Heart left ventricle (tissue), 16 donors: ENCODE measurements at regions of chr6 and their contacts with region 1.

Region 1: DNA sequence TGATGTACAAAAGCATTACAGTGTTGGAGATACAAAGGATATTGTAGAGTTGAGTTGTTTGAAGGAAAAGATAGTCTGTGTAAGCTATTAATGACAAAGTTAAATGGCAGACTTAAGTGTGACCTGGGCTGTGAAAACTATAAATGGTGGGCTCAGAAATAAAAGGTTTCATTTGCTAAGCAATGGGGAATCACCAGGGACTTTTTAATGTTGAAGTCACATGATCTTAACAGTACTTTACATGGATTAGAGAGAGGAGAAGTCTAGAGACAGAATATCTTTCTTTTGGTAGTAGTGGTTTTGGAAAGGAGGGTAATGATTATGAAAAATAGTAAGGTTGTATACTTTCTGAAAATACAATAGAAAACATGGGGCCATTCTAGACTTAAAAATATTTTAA is 67.1 kb downstream of the SCAF8 start:
- DNase-seq: no peak
- ATAC-seq: no peak
- H3K4me3 ChIP-seq: no peak overlapping the region
- H3K27ac ChIP-seq: no peak overlapping the region
- H3K4me1 ChIP-seq: peaks cover 0 to 12% (median 0%) of the 10 kb centered on the region in 12 donors
- H3K27me3 ChIP-seq: no peaks in the 10 kb centered on the region
- CTCF ChIP-seq: no peak
- POLR2A ChIP-seq: no peak

Region 2: GRCh38 chr6:154558984-154559383 is 241.4 kb before region 1 on chr6:
- intact Hi-C with region 1: no loop called
- DNase-seq: no peak
- ATAC-seq: peak in 1 of 4 donors; percentile 44
- H3K4me3 ChIP-seq: no peak overlapping the region
- H3K27ac ChIP-seq: no peak overlapping the region
- H3K4me1 ChIP-seq: peaks cover 0 to 13% (median 0%) of the 10 kb centered on the region in 12 donors
- H3K27me3 ChIP-seq: no peaks in the 10 kb centered on the region
- CTCF ChIP-seq: no peak
- POLR2A ChIP-seq: no peak

Region 3: DNA sequence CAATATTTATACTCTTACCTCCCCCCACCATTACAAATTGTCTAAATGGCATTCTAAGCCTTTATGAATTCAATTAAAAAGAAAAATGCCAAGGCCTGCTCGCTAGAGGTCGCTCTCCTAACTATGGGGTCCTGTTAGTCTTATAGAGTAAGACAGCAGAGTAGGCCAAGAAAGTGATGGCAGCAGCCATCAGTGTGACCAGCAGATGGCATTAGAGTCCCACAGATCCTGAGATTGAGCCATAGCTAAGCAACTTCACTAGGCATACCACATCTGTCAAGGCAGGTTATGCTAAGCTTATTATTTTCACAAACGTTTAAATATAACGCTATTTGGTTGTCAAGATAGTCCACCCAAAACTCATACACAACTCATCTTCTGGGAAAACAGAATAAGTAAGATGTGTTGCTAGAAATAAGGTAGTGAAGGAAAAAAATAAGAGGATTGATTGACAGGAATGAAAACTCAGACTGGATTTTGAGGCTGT is 124.7 kb before region 1 on chr6:
- intact Hi-C with region 1: loop called (anchors 1 to 5 kb)
- DNase-seq: peak; percentile 74 to 87 (median 83)
- ATAC-seq: peak; percentile 94 to 99 (median 98)
- H3K4me3 ChIP-seq: no peak overlapping the region
- H3K27ac ChIP-seq: no peak overlapping the region
- H3K4me1 ChIP-seq: no peaks in the 10 kb centered on the region
- H3K27me3 ChIP-seq: no peaks in the 10 kb centered on the region
- CTCF ChIP-seq: peak; percentile 95 to 100 (median 100)
- POLR2A ChIP-seq: no peak

Region 4: DNA sequence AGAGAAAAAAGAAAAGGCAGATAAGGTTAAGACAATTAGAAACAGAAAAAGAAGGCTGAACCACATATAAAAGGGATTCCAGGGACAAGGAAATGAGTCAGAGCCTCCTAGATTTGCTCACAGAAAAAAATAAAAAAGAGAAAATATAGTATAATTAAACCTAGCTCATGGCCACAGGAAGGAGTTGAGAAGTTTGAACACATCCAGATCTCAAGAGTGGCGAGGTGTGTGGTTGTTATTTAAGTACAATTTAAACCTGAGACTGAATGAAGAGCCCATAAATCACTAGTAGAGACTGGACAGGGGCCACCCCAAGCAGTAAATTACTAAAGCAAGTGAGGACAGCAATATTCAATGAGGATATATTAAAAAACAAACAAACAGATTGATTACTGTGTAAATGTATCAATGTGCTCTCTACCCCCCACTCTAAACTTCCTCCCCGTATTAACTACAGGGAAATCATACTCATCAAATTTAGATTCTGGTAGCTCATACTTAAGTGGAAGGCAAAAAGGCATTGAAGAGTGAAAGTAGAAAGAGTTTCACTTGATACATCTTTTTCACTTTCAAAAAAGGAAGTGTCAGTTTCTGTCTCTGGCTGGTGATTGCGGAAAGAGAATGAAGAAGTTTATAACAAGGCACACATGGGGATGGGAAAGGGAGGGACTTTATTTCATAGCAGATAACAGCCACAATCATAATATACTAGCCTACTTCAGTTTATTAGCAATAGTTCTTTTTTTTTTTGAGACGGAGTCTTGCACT is 116.4 kb before region 1 on chr6:
- intact Hi-C with region 1: loop called in 3 of 10 experiments (anchors 5 kb)
- DNase-seq: no peak
- ATAC-seq: no peak
- H3K4me3 ChIP-seq: no peak overlapping the region
- H3K27ac ChIP-seq: peak overlapping the region in 1 of 12 donors; percentile 70
- H3K4me1 ChIP-seq: peaks cover 0 to 13% (median 0%) of the 10 kb centered on the region in 12 donors
- H3K27me3 ChIP-seq: no peaks in the 10 kb centered on the region
- CTCF ChIP-seq: no peak
- POLR2A ChIP-seq: no peak

Region 5: DNA sequence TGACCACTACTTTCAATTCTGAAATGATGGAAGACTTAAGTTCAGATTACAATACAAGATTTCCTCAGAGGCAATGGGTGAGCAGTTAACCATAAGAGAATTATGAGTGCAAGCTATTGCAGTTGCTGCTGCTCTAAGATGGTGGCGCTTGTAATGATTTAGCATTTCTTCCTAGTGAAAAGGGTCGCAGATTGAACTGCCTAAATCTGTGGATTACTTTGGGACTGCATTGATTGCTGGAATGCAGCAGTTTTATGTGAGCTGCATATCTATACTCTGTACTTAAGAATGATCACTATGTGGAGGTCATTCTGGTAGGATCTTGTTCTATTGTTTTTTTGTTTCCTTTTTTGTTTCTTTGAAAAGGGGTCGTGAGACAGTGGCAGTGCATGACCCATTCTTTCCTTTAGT is 61.8 kb before region 1 on chr6:
- intact Hi-C with region 1: loop called in 9 of 10 experiments (anchors 2 to 5 kb)
- DNase-seq: no peak
- ATAC-seq: no peak
- H3K4me3 ChIP-seq: no peak overlapping the region
- H3K27ac ChIP-seq: no peak overlapping the region
- H3K4me1 ChIP-seq: peaks cover 14 to 92% (median 80%) of the 10 kb centered on the region in 12 donors
- H3K27me3 ChIP-seq: no peaks in the 10 kb centered on the region
- CTCF ChIP-seq: no peak
- POLR2A ChIP-seq: no peak